Sciatic nerve (tissue), 2 donors: ENCODE measurements at regions of chr22 and their contacts with region 1.

Region 1: DNA sequence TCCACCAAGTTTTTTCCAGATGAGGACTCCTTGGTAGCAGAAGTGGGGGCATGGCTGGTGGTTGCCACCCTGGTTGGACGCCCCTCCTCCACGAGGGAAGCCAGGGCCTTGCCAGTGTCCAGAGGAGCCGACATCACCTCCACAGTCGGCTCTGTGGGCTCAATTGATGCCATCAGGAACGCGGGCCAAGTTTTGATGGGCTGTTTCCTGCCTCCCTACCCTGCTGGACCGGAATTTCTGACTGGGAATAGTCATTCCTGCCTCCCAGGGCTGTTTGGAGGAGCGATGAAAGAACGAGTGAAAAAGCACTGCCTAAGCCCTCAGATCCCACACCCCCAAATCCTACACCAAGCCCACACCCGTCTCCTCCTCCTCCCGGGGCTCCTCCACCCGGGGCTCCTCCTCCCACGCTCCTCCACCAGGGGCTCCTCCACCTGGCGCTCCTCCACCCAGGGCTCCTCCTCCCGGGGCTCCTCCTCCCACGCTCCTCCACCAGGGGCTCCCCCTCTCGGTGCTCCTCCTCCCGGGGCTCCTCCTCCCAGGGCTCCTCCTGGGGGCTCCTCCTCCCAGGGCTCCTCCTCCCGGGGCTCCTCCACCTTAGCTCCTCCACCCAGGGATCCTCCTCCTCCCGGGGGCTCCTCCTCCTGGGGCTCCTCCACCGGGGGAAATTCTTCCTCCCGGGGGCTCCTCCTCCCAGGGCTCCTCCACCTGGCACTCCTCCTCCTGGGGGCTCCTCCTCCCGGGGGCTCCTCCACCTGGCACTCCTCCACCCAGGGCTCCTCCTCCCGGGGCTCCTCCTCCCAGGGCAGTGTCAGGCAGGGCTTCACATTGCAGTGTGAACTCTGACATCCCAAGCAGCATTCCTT is 10.0 kb upstream of the PRR5 start:
- DNase-seq: no peak
- ATAC-seq: peak; percentile 23

Region 2: DNA sequence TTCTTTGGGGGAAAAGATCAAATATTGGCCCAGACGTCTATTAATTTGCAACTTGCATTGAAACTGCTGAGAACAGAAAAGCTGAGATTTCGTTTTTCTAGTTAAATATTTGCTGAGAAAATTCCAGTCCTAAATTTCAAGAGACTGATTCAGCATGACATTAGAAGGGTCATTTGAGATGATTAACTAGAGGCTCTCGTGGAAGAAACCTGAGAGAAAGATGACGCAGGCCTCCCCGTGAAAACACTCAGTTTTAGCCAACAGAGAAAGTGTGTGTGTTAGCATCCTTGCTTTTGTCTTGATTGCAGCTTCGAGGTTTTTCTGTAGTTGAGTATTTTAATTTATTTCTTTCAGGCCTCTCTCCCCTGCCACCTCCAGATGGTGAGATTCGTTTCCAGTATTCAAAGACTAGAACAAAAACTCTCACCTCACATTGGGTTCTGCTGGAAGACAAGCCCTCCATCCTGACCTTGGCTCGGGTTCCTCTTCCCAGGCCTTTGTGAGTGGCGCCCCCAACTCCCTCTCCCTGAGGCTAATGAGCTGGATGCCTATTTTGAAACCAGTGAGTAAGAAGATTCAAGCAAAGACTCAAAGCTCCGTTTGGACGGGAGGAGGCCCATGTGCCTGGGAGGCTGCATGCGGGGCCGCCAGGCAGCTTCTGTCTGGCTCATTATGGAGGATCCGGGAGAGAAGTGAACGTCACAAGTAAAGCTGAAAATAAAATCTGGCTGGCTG is 1793.0 kb after region 1 on chr22:
- intact Hi-C with region 1: loop called (anchors 5 kb)
- DNase-seq: no peak
- ATAC-seq: no peak